ENCODE measurements at regions of chr6 and their contacts with region 1.

Region 1: DNA sequence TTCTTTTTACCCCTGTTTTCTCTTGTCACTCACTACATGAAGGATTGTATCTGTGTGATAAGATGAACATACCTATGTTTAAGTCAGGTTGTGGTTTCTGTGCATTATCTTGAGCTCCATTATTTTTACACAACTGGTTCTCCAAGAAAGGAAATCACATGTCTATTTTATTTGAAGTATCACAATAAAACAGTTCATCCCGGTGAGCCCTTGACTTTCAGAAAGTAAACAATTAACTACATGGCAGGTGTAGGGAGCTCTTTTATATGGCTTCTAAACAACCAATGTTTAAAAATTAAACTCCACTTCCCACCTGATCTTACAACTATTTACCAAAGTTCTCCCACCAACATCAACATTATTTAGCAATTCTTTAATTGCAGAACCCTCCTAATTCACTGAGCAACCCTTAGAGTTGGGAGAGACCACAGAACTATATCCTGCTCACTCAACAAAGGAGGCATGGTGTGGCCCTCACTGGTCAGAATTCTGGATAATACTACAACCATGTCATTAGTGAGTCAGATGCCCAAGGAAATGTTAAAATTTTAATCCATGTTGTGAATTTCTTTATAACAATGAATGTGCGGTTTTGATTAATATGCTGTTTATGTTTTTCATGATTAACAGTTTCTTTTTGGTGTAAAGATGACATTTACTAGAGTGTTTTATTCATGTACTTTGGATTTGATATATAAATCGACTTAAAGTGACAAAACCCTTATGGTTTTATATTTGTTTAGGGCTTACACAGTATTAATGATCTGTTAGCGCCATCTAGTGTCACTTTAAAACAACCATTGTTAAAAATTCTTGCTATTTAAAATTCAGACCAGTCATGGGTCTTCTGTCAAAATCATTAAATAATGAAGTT is 50.0 kb upstream of the SCGN start:
- DNase-seq: no peak
- H3K4me3 ChIP-seq: no peak overlapping the region
- H3K27ac ChIP-seq: no peak overlapping the region
- H3K4me1 ChIP-seq: no peaks in the 10 kb centered on the region
- H3K27me3 ChIP-seq: no peaks in the 10 kb centered on the region
- CTCF ChIP-seq: peak; percentile 47 to 62 (median 56)
- EP300 ChIP-seq: no peak
- POLR2A ChIP-seq: no peak

Region 2: GRCh38 chr6:25266456-25267100 is 335.5 kb before region 1 on chr6:
- intact Hi-C with region 1: loop called (anchors 5 kb)
- DNase-seq: no peak
- H3K4me3 ChIP-seq: no peak overlapping the region
- H3K27ac ChIP-seq: peak overlapping the region in 1 of 4 donors; percentile 41
- H3K4me1 ChIP-seq: no peaks in the 10 kb centered on the region
- H3K27me3 ChIP-seq: no peaks in the 10 kb centered on the region
- CTCF ChIP-seq: no peak
- EP300 ChIP-seq: no peak
- POLR2A ChIP-seq: no peak